Heart left ventricle (tissue), 16 donors: ENCODE measurements at regions of chr5 and their contacts with region 1.

Region 1: DNA sequence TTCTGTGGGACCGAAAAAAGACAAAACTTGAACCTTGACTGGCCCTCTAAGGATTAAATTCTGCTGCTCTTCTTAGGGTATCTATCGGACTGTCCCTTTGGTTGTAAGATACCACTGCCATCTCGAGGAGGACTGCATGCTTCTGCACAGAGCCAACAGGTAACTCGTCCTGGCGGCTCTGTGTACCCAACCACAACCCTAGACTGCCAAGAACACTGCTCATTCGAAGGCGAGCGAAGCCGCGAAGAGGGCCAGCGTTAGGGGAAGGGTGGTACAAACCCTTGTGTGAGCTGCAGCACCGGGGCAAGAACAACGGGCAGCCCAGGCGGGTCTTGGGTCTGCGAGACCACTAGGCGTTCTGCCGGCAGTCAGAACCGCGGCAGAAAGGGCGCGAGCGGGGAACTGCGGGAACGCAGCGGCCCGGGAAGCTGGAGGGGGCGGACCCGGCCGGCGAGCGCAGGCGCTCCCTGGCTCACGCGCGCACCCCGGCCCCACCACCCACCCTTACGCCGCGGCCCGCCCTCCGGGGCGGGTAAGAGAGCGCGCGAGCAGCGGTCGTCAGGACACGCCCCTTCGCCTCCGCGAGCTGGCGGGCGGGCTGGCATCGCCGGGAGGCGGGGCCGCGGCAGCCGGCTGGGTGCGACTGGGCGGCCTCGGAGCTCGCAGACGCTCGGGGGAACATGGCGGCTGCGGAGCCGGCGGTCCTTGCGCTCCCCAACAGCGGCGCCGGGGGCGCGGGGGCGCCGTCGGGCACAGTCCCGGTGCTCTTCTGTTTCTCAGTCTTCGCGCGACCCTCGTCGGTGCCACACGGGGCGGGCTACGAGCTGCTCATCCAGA is at the start of gene ISOC1:
- DNase-seq: peak; percentile 94 to 96 (median 95)
- ATAC-seq: peak; percentile 87 to 98 (median 95)
- H3K4me3 ChIP-seq: peak within 1 kb of the TSS; percentile 75 to 95 (median 83)
- H3K27ac ChIP-seq: peak within 1 kb of the TSS; percentile 74 to 97 (median 90)
- H3K4me1 ChIP-seq: peaks cover 2 to 40% (median 31%) of the 10 kb centered on the region in 12 donors
- H3K27me3 ChIP-seq: no peaks in the 10 kb centered on the region
- CTCF ChIP-seq: peak in 1 of 12 donors; percentile 11
- POLR2A ChIP-seq: peak; percentile 44 to 95
- total RNA-seq, gene ISOC1: 44.8 to 98.6 (median 73.8) TPM

Region 2: DNA sequence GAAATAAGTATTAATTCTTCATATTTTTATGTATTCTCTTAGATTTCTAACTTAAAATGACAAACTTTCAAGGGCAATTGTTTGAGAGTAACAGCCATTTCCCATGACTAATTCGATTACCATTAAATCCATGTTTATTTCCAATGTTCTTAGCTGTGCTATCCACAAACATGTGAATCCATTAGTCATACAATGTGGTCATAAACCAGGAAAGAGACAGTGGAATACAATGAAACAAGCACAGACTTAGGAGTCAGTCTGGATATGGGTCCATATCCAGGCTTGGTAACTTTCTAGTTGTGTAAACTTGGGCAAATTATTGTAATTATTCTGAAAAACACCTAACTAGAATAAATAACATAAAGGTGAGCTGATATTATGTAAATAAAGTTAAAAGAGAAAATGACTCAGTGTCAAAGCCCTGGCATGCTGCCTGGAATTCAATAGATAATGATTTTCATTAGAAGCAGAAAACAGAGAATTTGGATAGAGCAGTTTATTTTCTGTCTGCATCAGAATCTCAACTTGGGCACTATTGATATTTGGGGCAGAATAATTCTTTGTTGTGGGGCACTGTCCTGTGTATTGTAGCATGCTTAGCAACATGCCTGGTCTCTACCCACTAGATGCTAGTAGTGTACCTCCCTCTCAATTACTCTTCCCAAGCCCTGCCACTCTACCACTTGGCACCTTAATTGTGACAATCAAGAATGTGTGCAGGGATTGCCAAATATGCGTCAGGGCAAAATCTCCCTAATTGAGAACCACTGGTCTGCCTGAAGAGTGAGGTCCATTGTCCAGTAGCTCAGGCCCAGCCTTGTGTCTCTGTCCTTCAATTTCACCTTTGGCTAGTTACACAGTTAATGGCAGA is 173.7 kb before region 1 on chr5:
- intact Hi-C with region 1: loop called in 1 of 10 experiments (anchors 10 kb)
- DNase-seq: peak in 4 of 5 donors; percentile 33 to 62 (median 43)
- ATAC-seq: peak; percentile 88 to 95 (median 94)
- H3K4me3 ChIP-seq: no peak overlapping the region
- H3K27ac ChIP-seq: peak overlapping the region in 10 of 12 donors; percentile 2 to 74 (median 65)
- H3K4me1 ChIP-seq: peaks cover 0 to 11% (median 0%) of the 10 kb centered on the region in 12 donors
- H3K27me3 ChIP-seq: no peaks in the 10 kb centered on the region
- CTCF ChIP-seq: no peak
- POLR2A ChIP-seq: no peak

Region 3: DNA sequence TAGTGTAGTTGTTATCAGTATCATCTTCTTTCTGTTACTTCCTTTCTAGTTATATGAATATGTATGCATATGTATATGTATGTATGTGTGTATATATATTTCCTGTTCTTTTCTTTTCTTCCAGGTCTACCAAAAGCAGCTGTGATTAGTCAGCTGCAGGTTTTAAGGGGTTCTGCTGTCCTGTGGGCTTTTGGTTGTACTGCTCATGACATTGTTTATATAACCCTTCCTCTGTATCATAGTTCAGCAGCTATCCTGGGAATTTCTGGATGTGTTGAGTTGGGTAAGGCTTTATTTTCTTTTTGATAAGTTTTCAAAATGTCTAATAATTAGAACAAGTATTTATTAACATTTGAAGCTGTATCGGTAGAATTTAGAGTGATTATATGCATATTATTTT is 105.8 kb before region 1 on chr5:
- intact Hi-C with region 1: no loop called
- DNase-seq: no peak
- ATAC-seq: no peak
- H3K4me3 ChIP-seq: no peak overlapping the region
- H3K27ac ChIP-seq: no peak overlapping the region
- H3K4me1 ChIP-seq: no peaks in the 10 kb centered on the region
- H3K27me3 ChIP-seq: no peaks in the 10 kb centered on the region
- CTCF ChIP-seq: no peak
- POLR2A ChIP-seq: no peak

Region 4: GRCh38 chr5:129019401-129019908 is 74.8 kb before region 1 on chr5:
- intact Hi-C with region 1: no loop called
- DNase-seq: no peak
- ATAC-seq: no peak
- H3K4me3 ChIP-seq: no peak overlapping the region
- H3K27ac ChIP-seq: no peak overlapping the region
- H3K4me1 ChIP-seq: peaks cover 0 to 11% (median 0%) of the 10 kb centered on the region in 12 donors
- H3K27me3 ChIP-seq: no peaks in the 10 kb centered on the region
- CTCF ChIP-seq: no peak
- POLR2A ChIP-seq: no peak

Region 5: GRCh38 chr5:129141696-129142095 is 47.4 kb after region 1 on chr5:
- intact Hi-C with region 1: no loop called
- DNase-seq: no peak
- ATAC-seq: no peak
- H3K4me3 ChIP-seq: no peak overlapping the region
- H3K27ac ChIP-seq: no peak overlapping the region
- H3K4me1 ChIP-seq: peaks cover 0 to 4% (median 0%) of the 10 kb centered on the region in 12 donors
- H3K27me3 ChIP-seq: no peaks in the 10 kb centered on the region
- CTCF ChIP-seq: no peak
- POLR2A ChIP-seq: no peak

Region 6: GRCh38 chr5:129172580-129172979 is 78.3 kb after region 1 on chr5:
- intact Hi-C with region 1: no loop called
- DNase-seq: no peak
- ATAC-seq: peak in 2 of 4 donors; percentile 31 to 51
- H3K4me3 ChIP-seq: no peak overlapping the region
- H3K27ac ChIP-seq: no peak overlapping the region
- H3K4me1 ChIP-seq: no peaks in the 10 kb centered on the region
- H3K27me3 ChIP-seq: no peaks in the 10 kb centered on the region
- CTCF ChIP-seq: peak in 7 of 12 donors; percentile 12 to 38 (median 32)
- POLR2A ChIP-seq: no peak